Activated naive CD4-positive, alpha-beta T cell treated with anti-CD3 and anti-CD28 coated beads, Interleukin-2, amount 10 ng/mL, durations not matched to agents 7 days and 5 days (primary cell): ENCODE measurements at regions of chr17 and their contacts with region 1.

Region 1: DNA sequence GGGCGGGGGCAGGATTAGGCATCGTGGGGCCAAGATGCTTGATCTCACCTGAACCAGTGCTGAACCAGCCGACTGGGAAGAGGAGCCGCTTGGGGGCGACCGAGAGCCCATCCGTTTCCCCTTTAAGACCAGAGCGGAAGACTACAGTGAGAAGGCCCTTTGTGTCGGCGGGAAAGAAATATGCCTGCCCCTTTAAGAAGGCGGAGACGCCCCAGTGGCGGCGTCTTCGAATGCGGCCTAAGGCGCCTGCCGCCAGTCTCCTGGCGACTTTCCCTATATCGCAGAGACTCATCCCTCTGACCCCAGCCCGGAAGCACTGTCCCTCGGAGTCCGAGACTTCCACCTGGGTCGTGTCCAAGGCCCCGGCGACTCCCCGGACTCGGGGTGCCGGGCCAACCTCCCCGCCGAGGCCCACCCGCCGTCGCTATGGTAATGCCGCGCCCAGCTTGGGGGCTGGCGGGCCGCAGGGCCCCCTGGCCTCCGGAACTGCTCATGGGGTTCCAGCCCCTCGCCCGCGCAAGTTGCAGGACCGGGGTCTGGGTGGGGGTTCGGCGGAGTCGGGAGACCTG is at the start of gene HROB:
- DNase-seq: peak; percentile 99
- H3K4me3 Mint-ChIP-seq: peak within 1 kb of the TSS; percentile 80
- H3K27ac Mint-ChIP-seq: peak within 1 kb of the TSS; percentile 91
- H3K4me1 Mint-ChIP-seq: peaks cover 32% of the 10 kb centered on the region
- H3K27me3 Mint-ChIP-seq: peaks cover 16% of the 10 kb centered on the region

Region 2: GRCh38 chr17:44123356-44124117 is 18.3 kb before region 1 on chr17 and contains the start of gene HDAC5:
- CTCF ChIA-PET with region 1: interaction called, 15 read pairs
- DNase-seq: peak; percentile 96
- H3K4me3 Mint-ChIP-seq: peak within 1 kb of the TSS; percentile 96
- H3K27ac Mint-ChIP-seq: peak within 1 kb of the TSS; percentile 94
- H3K4me1 Mint-ChIP-seq: peaks cover 37% of the 10 kb centered on the region
- H3K27me3 Mint-ChIP-seq: peaks cover 39% of the 10 kb centered on the region